ENCODE measurements at regions of chr21 and their contacts with region 1.

Region 1: GRCh38 chr21:42593007-42593806 is 60.2 kb upstream of the PDE9A start:
- DNase-seq: peak; percentile 79
- H3K4me3 Mint-ChIP-seq: no peak overlapping the region
- H3K27ac Mint-ChIP-seq: no peak overlapping the region
- H3K4me1 Mint-ChIP-seq: peaks cover 4% of the 10 kb centered on the region
- H3K27me3 Mint-ChIP-seq: no peaks in the 10 kb centered on the region

Region 2: DNA sequence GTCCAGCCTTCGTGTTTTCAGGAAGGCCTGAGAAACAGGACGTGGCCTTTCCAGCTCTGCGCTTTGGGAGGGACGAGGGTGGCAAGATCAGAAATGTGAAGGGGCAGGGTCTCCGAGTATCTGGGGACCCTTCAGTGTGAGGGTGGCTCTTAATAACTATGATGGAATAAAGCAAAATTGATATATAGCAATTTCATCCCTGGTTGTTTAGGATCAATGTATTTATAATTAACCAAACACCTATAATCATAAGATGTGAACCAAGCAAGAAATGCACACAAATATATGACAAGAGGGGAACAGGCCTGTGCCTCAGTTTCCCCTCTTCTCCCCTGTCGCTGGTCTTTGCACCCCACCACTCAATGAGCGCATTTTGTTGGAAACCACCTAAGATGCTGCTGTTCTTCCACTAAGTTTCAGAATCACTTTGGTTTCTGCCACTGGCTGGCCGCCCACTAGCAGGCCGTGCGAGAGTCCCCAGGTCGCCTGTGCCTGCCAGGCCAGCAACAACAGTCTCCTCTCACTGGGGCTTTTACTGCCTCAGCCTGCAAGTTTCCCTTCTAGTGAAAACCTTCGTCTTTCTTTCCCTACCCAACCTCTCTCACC is 152.9 kb before region 1 on chr21:
- CTCF ChIA-PET with region 1: no interaction called
- POLR2A ChIA-PET with region 1: no interaction called
- intact Hi-C with region 1: no loop called
- DNase-seq: peak; percentile 75
- H3K4me3 Mint-ChIP-seq: no peak overlapping the region
- H3K27ac Mint-ChIP-seq: peak overlapping the region; percentile 84
- H3K4me1 Mint-ChIP-seq: peaks cover 45% of the 10 kb centered on the region
- H3K27me3 Mint-ChIP-seq: no peaks in the 10 kb centered on the region

Region 3: DNA sequence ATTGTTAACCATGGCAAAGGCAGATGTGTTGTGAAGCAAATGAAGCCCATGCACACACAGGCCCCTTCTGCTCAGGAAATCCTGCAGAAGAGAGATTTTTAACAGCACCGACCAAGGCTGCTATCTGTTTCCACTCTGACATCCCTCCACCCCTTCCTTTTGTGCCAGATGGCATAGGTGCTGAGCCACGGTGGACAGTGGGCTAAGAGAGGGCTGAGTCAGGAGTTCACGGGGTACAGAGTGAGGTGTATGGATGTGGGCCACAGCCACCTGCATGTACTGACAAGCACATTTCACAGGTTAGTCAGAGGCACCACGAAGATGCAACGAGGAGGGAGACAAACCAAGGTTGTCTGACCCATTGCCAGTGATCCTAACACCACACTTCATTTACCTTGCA is 106.7 kb before region 1 on chr21:
- CTCF ChIA-PET with region 1: no interaction called
- POLR2A ChIA-PET with region 1: no interaction called
- intact Hi-C with region 1: no loop called
- DNase-seq: no peak
- H3K4me3 Mint-ChIP-seq: no peak overlapping the region
- H3K27ac Mint-ChIP-seq: no peak overlapping the region
- H3K4me1 Mint-ChIP-seq: no peaks in the 10 kb centered on the region
- H3K27me3 Mint-ChIP-seq: peaks cover 21% of the 10 kb centered on the region

Region 4: GRCh38 chr21:42537106-42537742 is 56.0 kb before region 1 on chr21:
- CTCF ChIA-PET with region 1: no interaction called
- POLR2A ChIA-PET with region 1: no interaction called
- intact Hi-C with region 1: no loop called
- DNase-seq: peak; percentile 43
- H3K4me3 Mint-ChIP-seq: no peak overlapping the region
- H3K27ac Mint-ChIP-seq: no peak overlapping the region
- H3K4me1 Mint-ChIP-seq: peaks cover 7% of the 10 kb centered on the region
- H3K27me3 Mint-ChIP-seq: no peaks in the 10 kb centered on the region

Region 5: GRCh38 chr21:42652527-42653230 is 59.5 kb after region 1 on chr21:
- CTCF ChIA-PET with region 1: interaction called, 5 read pairs
- POLR2A ChIA-PET with region 1: no interaction called
- intact Hi-C with region 1: loop called (anchors 5 kb)
- DNase-seq: no peak
- H3K4me3 Mint-ChIP-seq: peak overlapping the region; percentile 70
- H3K27ac Mint-ChIP-seq: no peak overlapping the region
- H3K4me1 Mint-ChIP-seq: peaks cover 11% of the 10 kb centered on the region
- H3K27me3 Mint-ChIP-seq: peaks cover 14% of the 10 kb centered on the region

Region 6: GRCh38 chr21:42818328-42818749 is 225.1 kb after region 1 on chr21:
- CTCF ChIA-PET with region 1: interaction called, 61 read pairs
- POLR2A ChIA-PET with region 1: no interaction called
- intact Hi-C with region 1: loop called (anchors 5 kb)
- DNase-seq: peak; percentile 73
- H3K4me3 Mint-ChIP-seq: no peak overlapping the region
- H3K27ac Mint-ChIP-seq: no peak overlapping the region
- H3K4me1 Mint-ChIP-seq: no peaks in the 10 kb centered on the region
- H3K27me3 Mint-ChIP-seq: peaks cover 5% of the 10 kb centered on the region

Region 7: DNA sequence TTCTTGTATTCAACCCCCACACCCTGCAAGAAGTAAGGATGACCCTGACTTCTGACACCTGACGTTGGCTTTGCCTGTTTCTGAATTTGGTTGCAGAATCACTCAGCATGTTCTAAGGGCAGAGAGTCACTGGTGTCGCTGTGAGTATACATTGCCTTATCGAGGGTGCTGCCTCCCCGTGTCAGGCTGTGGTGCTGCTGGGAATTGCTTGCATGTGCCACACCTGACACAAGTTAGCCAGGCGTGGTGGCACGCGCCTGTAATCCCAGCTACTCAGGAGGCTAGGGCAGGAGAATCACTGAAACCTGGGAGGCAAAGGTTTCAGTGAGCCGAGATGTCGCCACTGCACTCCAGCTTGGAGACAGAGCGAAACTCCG is 240.2 kb after region 1 on chr21:
- CTCF ChIA-PET with region 1: interaction called, 5 read pairs
- POLR2A ChIA-PET with region 1: no interaction called
- intact Hi-C with region 1: loop called (anchors 5 kb)
- DNase-seq: peak; percentile 83
- H3K4me3 Mint-ChIP-seq: peak overlapping the region; percentile 16
- H3K27ac Mint-ChIP-seq: no peak overlapping the region
- H3K4me1 Mint-ChIP-seq: peaks cover 35% of the 10 kb centered on the region
- H3K27me3 Mint-ChIP-seq: peaks cover 9% of the 10 kb centered on the region